Activated naive CD4-positive, alpha-beta T cell treated with anti-CD3 and anti-CD28 coated beads for 36 hours (primary cell): ENCODE measurements at regions of chr14 and their contacts with region 1.

Region 1: DNA sequence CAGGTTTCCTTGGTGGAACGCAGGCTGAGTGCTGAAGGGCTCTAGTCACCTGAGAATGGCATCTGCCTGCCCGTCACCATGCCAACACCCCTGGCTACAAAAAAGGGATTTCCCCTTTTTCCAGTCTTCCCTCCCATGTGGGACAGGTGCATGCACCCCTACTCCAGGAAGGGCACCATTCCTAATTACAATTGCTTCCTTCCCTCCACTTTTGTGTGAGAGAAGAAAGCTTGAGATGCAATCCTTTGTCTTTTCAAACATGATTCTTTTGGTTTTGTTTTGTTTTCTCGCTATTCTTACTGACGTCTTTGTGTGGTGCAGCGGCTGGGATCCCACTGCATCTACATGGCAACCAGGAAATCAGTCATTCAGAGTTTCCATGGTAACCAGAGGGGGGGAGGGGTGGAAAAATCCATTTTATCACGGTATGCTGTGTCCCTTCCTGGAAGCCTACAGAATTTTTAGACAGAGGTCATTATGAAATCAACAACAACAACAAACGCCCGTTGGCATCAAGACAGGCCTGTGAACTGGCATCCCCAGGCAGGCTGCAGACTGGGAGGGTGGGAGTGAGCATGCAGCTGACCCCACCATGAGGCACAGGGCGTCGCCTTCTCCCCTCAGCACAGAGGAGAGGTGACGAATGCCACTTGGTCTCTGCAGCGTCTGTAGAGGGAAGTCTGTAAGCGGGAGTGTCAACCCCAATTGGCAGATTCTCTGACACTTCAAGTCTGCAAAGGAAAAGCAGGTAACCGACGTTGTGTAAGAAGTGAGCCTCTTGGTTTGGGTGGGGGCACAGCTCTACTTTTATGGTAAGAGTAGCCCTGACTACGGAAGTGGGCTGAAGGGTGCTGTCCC is 13.6 kb upstream of the GNG2 start:
- DNase-seq: peak; percentile 93
- H3K4me3 Mint-ChIP-seq: peak overlapping the region; percentile 85
- H3K27ac Mint-ChIP-seq: peak overlapping the region; percentile 100
- H3K4me1 Mint-ChIP-seq: peaks cover 72% of the 10 kb centered on the region
- H3K27me3 Mint-ChIP-seq: no peaks in the 10 kb centered on the region

Region 2: DNA sequence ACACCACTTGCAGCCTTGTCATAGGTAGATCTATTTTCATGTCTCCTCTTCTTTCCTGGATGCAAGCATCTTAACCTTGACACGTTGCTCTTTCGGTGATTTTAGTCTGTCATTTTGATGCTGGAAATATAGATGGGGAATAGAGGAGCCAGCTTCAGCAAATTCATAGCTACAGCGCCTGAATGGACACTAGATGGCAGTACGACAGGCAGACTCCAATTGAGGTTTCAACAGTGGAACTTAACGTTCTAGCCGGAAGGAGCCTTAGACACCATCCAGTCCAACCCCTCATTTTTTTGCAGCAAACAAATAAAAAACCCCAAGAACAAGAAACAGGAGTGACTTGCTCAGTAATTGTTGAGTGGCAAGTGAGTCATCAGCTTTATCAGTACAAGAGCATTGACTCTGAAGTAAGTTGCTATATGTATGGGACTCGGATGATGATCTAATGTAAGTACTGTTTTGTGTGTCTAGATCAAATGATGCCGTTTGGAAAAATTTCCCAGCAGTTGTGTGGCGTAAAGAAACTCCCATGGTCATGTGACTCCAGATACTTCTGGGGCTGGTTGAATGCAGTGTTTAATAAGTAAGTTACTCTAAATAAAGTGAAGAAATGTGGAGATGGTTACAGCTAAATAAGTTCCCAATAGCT is 1525.7 kb before region 1 on chr14:
- CTCF ChIA-PET with region 1: no interaction called
- intact Hi-C with region 1: loop called (anchors 10 kb)
- DNase-seq: peak; percentile 80
- H3K4me3 Mint-ChIP-seq: no peak overlapping the region
- H3K27ac Mint-ChIP-seq: no peak overlapping the region
- H3K4me1 Mint-ChIP-seq: peaks cover 25% of the 10 kb centered on the region
- H3K27me3 Mint-ChIP-seq: no peaks in the 10 kb centered on the region

Region 3: GRCh38 chr14:51260225-51260624 is 586.6 kb before region 1 on chr14:
- CTCF ChIA-PET with region 1: no interaction called
- intact Hi-C with region 1: loop called (anchors 1 kb)
- DNase-seq: peak; percentile 42
- H3K4me3 Mint-ChIP-seq: no peak overlapping the region
- H3K27ac Mint-ChIP-seq: peak overlapping the region; percentile 71
- H3K4me1 Mint-ChIP-seq: peaks cover 24% of the 10 kb centered on the region
- H3K27me3 Mint-ChIP-seq: no peaks in the 10 kb centered on the region

Region 4: DNA sequence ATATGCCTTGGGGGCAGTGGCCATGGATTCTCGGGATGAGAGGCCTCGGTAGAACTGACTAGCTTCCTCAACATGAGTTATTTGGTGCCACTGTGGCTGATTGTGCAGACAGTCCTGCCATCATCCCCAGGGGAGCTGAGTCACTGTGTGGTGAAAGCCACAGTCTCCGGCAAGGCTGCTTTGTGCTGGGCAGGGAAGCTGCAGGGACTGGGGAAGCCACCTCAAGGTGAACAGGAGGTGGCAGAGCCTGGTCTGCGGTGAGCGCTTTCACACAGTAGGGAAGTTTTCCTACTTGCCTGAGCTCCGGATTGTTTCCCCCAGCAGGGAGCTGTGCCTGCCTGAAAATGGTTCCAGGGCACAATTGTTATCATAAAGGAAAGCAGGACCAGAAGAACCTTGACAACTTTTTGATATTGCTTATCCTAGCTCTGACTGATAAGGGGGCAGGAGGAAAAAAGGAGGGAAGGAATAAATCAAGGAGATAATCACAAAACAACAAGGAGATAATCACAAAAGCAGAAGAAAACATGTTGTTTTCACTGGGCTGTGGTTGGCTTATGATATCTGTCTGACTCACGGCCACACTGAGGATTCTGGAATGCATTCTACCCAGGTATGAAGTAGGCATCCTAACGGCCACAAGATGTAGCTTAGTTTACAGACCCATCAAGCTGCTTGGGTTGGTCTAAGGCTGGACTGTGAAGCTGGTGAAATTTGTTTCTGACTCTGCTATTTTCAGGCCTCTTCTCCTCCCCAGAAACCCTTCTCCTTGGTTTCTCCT is 18.7 kb before region 1 on chr14:
- CTCF ChIA-PET with region 1: interaction called, 4 read pairs
- intact Hi-C with region 1: loop called (anchors 1 kb)
- DNase-seq: peak; percentile 89
- H3K4me3 Mint-ChIP-seq: no peak overlapping the region
- H3K27ac Mint-ChIP-seq: peak overlapping the region; percentile 48
- H3K4me1 Mint-ChIP-seq: no peaks in the 10 kb centered on the region
- H3K27me3 Mint-ChIP-seq: no peaks in the 10 kb centered on the region

Region 5: DNA sequence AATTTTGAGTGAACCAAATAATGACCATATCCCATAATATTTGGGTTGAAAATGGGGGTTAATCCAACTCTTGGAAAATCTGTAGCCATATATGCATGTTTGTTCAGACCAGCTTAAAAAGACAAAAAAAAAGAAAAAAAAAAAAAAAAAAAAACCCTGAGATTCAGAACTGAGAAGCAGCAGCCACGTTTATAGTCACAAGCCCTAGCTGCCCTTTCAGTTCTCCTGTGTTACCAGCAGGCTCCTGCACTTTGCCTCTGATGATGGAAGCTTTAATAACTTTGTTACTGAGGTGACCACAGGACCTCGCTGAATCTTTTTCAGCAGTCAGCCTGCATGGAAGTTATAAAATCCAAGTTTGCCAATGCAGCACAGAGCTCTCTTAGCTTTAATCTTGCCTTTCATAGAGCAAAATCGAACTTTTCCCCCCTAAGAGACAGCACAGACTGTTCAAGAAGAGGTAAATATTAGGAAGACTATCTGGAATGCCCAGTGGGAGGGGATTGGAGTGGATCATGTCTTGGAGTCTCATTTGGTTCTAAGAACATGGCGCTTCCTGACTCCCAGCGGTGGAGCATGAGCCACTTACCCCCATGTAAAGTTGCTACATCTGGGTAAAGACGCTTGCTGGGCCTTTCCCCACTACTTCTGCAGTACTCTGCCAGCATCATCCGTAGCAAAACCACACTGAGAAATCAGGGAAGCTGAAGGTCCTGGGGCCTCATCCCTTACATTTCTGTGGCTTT is 34.1 kb after region 1 on chr14:
- CTCF ChIA-PET with region 1: no interaction called
- intact Hi-C with region 1: loop called (anchors 1 kb)
- DNase-seq: no peak
- H3K4me3 Mint-ChIP-seq: no peak overlapping the region
- H3K27ac Mint-ChIP-seq: no peak overlapping the region
- H3K4me1 Mint-ChIP-seq: peaks cover 76% of the 10 kb centered on the region
- H3K27me3 Mint-ChIP-seq: no peaks in the 10 kb centered on the region

Region 6: GRCh38 chr14:52402812-52403526 is 556.1 kb after region 1 on chr14:
- CTCF ChIA-PET with region 1: no interaction called
- intact Hi-C with region 1: loop called (anchors 5 kb)
- DNase-seq: peak; percentile 77
- H3K4me3 Mint-ChIP-seq: no peak overlapping the region
- H3K27ac Mint-ChIP-seq: no peak overlapping the region
- H3K4me1 Mint-ChIP-seq: peaks cover 50% of the 10 kb centered on the region
- H3K27me3 Mint-ChIP-seq: peaks cover 4% of the 10 kb centered on the region